Heart left ventricle (tissue), 16 donors: ENCODE measurements at regions of chr2 and their contacts with region 1.

Region 1: GRCh38 chr2:197378494-197379307 is 56.1 kb downstream of the SF3B1 start:
- DNase-seq: peak in 2 of 5 donors; percentile 18 to 45
- ATAC-seq: peak in 3 of 4 donors; percentile 33 to 76 (median 53)
- H3K4me3 ChIP-seq: no peak overlapping the region
- H3K27ac ChIP-seq: no peak overlapping the region
- H3K4me1 ChIP-seq: peaks cover 0 to 4% (median 0%) of the 10 kb centered on the region in 12 donors
- H3K27me3 ChIP-seq: no peaks in the 10 kb centered on the region
- CTCF ChIP-seq: peak; percentile 62 to 87 (median 77)
- POLR2A ChIP-seq: no peak

Region 2: GRCh38 chr2:196750982-196751635 is 627.6 kb before region 1 on chr2:
- intact Hi-C with region 1: loop called in 1 of 10 experiments (anchors 5 kb)
- DNase-seq: peak in 4 of 5 donors; percentile 33 to 41 (median 37)
- ATAC-seq: peak in 3 of 4 donors; percentile 56 to 80 (median 71)
- H3K4me3 ChIP-seq: no peak overlapping the region
- H3K27ac ChIP-seq: no peak overlapping the region
- H3K4me1 ChIP-seq: peaks cover 0 to 3% (median 0%) of the 10 kb centered on the region in 12 donors
- H3K27me3 ChIP-seq: no peaks in the 10 kb centered on the region
- CTCF ChIP-seq: peak; percentile 59 to 89 (median 72)
- POLR2A ChIP-seq: no peak

Region 3: DNA sequence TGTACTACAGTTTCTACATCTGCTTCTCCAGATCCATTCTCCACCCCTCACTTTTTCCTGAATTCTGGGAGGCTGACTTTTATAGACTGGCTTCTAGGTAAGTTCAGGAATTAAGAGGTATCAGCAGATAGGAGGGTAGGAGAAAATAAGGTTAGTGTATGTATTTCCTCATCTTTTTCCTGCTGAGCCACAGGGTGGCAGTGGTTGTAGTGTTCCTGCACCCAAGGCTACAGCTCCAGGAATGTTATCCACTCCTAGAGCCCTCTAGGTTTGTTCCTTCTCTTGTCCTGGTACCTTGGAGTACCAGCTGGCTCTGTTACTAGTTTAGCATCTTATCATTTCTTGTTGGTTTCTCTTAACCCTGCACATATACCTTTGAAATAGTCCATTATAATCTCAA is 528.8 kb before region 1 on chr2:
- intact Hi-C with region 1: loop called in 2 of 10 experiments (anchors 5 to 10 kb)
- DNase-seq: no peak
- ATAC-seq: peak in 2 of 4 donors; percentile 61 to 70
- H3K4me3 ChIP-seq: no peak overlapping the region
- H3K27ac ChIP-seq: no peak overlapping the region
- H3K4me1 ChIP-seq: no peaks in the 10 kb centered on the region
- H3K27me3 ChIP-seq: no peaks in the 10 kb centered on the region
- CTCF ChIP-seq: peak in 6 of 12 donors; percentile 21 to 43 (median 34)
- POLR2A ChIP-seq: no peak

Region 4: DNA sequence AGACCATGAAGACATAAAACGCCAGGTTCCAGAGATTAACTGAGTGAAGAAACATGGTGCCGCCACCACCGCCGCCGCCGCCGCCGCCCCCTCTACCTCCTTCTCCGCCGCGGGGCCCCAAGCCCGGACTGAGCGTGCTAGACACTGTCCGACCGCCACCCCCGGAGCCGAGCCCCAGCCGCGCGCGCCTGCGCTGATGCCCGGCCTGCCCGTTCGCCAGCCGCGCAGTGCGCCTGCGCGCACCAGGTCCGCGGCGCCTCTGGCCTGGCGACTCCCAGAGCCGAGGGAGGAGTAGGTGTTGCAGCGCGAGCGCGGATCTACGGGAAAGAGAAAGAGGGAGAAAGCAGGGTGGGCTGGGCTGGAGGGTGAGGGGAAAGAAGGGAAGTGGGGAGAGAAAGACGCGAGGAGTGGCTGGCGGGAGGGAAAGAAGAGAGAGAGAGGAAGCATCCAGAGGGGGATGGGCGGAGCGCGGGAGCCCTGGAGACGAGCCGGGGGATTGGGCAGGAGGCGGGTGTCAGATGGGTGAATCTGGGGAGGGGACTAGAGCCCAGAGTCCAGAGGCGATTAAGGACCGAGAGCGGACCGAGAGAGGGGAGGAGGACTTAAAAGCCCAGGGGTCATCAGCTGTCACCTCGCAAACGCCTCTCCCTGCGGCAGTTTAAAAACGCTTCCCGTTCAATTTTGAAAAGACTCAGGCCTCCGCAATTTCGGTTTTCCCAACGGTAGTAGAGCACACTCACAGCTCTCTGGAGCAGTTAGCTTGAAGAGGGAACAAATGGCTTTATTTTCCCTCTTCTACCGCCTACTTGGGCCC is 451.9 kb before region 1 on chr2 and contains the start of gene PGAP1:
- intact Hi-C with region 1: loop called in 1 of 10 experiments (anchors 10 kb)
- DNase-seq: peak; percentile 90 to 95 (median 92)
- ATAC-seq: peak; percentile 95 to 99 (median 98)
- H3K4me3 ChIP-seq: peak within 1 kb of the TSS; percentile 59 to 98 (median 82)
- H3K27ac ChIP-seq: peak within 1 kb of the TSS; percentile 59 to 92 (median 89)
- H3K4me1 ChIP-seq: peaks cover 0 to 27% (median 10%) of the 10 kb centered on the region in 12 donors
- H3K27me3 ChIP-seq: no peaks in the 10 kb centered on the region
- CTCF ChIP-seq: no peak
- POLR2A ChIP-seq: peak in 1 of 2 donors; percentile 81
- total RNA-seq, gene PGAP1: 3.6 to 8.8 (median 5.8) TPM

Region 5: DNA sequence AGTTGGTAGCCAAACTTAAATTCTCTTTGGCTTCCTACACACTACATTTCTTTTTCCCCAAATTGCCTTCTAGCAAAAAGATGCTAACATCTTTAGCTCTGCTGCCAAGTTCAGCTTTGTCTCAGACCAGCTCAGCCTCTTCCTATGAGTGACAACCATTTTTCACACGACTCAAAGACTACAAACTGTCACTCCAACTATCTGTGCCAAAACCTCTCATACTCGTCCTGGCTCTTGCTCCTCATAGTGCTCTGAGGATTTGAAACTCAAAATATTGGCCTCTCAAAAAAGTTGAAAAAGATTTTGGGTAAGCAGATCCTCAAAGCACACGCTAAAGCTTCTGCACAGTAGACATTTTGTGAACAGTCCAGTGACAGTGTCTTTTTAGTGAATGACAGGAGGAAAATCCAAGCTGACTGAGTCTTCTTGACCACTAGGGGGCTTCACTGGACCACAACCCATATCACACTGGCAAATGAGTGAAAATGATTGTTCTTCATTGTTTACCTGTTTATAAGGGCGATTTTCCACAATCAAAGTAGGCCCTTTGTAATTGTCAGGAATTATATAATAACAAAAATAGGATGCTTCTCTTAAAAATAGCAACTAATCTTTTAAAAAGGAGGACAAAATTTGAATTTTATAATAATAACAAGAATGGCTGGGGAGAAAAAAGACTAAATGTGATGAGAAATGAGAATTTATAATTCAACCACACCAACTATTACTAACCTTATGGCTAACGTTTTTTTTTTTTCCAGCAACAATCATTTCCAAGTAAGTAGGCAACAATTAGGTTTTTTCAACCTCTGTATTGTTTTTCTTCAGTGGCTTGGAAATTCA is 366.7 kb before region 1 on chr2:
- intact Hi-C with region 1: loop called in 9 of 10 experiments (anchors 2 to 5 kb)
- DNase-seq: peak in 1 of 5 donors; percentile 22
- ATAC-seq: peak in 3 of 4 donors; percentile 66 to 73 (median 72)
- H3K4me3 ChIP-seq: no peak overlapping the region
- H3K27ac ChIP-seq: no peak overlapping the region
- H3K4me1 ChIP-seq: peaks cover 0 to 9% (median 0%) of the 10 kb centered on the region in 12 donors
- H3K27me3 ChIP-seq: no peaks in the 10 kb centered on the region
- CTCF ChIP-seq: peak; percentile 64 to 91 (median 82)
- POLR2A ChIP-seq: no peak

Region 6: GRCh38 chr2:197191177-197191939 is 187.3 kb before region 1 on chr2:
- intact Hi-C with region 1: loop called (anchors 1 to 5 kb)
- DNase-seq: no peak
- ATAC-seq: no peak
- H3K4me3 ChIP-seq: no peak overlapping the region
- H3K27ac ChIP-seq: peak overlapping the region in 1 of 12 donors; percentile 18
- H3K4me1 ChIP-seq: peaks cover 0 to 24% (median 11%) of the 10 kb centered on the region in 12 donors
- H3K27me3 ChIP-seq: no peaks in the 10 kb centered on the region
- CTCF ChIP-seq: peak; percentile 55 to 80 (median 72)
- POLR2A ChIP-seq: no peak

Region 7: GRCh38 chr2:197310271-197310985 is 68.3 kb before region 1 on chr2 and contains the start of gene ANKRD44:
- intact Hi-C with region 1: loop called in 3 of 10 experiments (anchors 5 to 10 kb)
- DNase-seq: peak; percentile 92 to 96 (median 94)
- ATAC-seq: peak; percentile 90 to 99 (median 98)
- H3K4me3 ChIP-seq: peak within 1 kb of the TSS; percentile 56 to 97 (median 72)
- H3K27ac ChIP-seq: peak within 1 kb of the TSS; percentile 43 to 91 (median 70)
- H3K4me1 ChIP-seq: peaks cover 0 to 41% (median 19%) of the 10 kb centered on the region in 12 donors
- H3K27me3 ChIP-seq: no peaks in the 10 kb centered on the region
- CTCF ChIP-seq: peak in 10 of 12 donors; percentile 26 to 59 (median 42)
- POLR2A ChIP-seq: peak in 1 of 2 donors; percentile 58
- total RNA-seq, gene ANKRD44: 4.9 to 30.6 (median 8.6) TPM

Region 8: GRCh38 chr2:197327472-197328098 is 51.1 kb before region 1 on chr2:
- intact Hi-C with region 1: no loop called
- DNase-seq: no peak
- ATAC-seq: no peak
- H3K4me3 ChIP-seq: no peak overlapping the region
- H3K27ac ChIP-seq: no peak overlapping the region
- H3K4me1 ChIP-seq: peaks cover 0 to 18% (median 0%) of the 10 kb centered on the region in 12 donors
- H3K27me3 ChIP-seq: no peaks in the 10 kb centered on the region
- CTCF ChIP-seq: no peak
- POLR2A ChIP-seq: no peak

Region 9: DNA sequence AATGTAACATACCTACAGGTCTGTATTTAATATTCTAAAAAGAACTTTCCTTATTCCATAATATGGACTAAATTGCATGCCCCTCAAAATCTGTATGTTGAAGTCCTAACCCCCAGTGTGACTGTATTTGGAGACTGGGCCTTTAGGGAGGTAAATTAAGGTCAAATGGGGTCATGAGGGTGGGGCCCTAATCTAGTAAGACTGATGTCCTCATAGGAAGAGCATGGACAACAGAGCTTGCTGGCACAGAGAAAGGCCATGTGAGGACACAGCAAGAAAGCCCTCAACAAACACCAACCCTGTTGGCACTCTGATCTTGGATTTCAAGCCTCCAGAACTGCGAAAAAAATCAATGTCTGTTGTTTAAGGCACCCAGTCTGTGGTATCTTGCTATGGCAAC is 37.6 kb after region 1 on chr2:
- intact Hi-C with region 1: no loop called
- DNase-seq: no peak
- ATAC-seq: no peak
- H3K4me3 ChIP-seq: no peak overlapping the region
- H3K27ac ChIP-seq: no peak overlapping the region
- H3K4me1 ChIP-seq: peaks cover 0 to 12% (median 2%) of the 10 kb centered on the region in 12 donors
- H3K27me3 ChIP-seq: no peaks in the 10 kb centered on the region
- CTCF ChIP-seq: no peak
- POLR2A ChIP-seq: no peak